Endothelial cell of umbilical vein (primary cell): ENCODE measurements at regions of chr1 and their contacts with region 1.

Region 1: GRCh38 chr1:171644805-171645483 is 7.5 kb downstream of the MYOC start:
- DNase-seq: peak; percentile 86
- H3K4me3 ChIP-seq: no peak overlapping the region
- H3K27ac ChIP-seq: no peak overlapping the region
- H3K4me1 ChIP-seq: no peaks in the 10 kb centered on the region
- H3K27me3 ChIP-seq: peaks cover 0 to 2% of the 10 kb centered on the region in 2 experiments
- CTCF ChIP-seq: peak; percentile 78 to 86
- POLR2A ChIP-seq: no peak

Region 2: GRCh38 chr1:171590022-171590421 is 54.9 kb before region 1 on chr1:
- CTCF ChIA-PET with region 1: no interaction called
- POLR2A ChIA-PET with region 1: no interaction called
- dilution Hi-C with region 1: no loop called
- intact Hi-C with region 1: no loop called
- DNase-seq: no peak
- H3K4me3 ChIP-seq: no peak overlapping the region
- H3K27ac ChIP-seq: no peak overlapping the region
- H3K4me1 ChIP-seq: no peaks in the 10 kb centered on the region
- H3K27me3 ChIP-seq: no peaks in the 10 kb centered on the region
- CTCF ChIP-seq: no peak
- POLR2A ChIP-seq: no peak

Region 3: DNA sequence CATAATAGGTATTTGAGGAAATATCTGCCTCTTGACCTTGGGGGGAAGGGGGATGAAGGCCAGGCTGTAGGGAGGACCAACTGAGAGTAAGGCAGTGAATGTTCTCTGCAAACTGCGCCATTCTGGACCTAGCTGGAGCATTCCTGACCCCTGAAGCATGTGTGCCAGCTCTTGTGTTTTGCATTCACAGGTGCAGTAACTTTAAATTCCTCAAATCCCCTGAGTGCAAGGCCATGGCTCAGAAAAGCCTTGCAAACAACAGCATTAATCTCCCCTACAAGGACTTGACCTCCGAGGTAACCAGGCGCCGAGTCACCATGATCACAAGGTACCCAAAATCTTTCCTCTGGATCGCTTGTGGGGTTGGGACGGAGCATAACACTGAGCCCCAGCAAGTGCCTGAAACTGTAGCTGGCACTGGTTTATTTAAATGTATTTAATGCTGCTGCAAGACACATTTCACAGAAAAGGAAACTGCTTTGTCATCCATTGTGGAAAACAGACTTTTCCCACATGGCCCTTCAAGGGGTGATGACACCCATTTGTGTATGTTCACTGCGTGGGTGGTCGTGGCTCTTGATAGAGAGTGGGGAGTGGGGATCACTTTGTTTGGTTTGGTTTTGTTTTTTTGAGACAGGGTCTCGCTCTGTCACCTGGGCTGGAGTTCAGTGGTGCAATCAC is 21.2 kb before region 1 on chr1:
- CTCF ChIA-PET with region 1: interaction called, 21 read pairs
- POLR2A ChIA-PET with region 1: no interaction called
- dilution Hi-C with region 1: no loop called
- intact Hi-C with region 1: no loop called
- DNase-seq: no peak
- H3K4me3 ChIP-seq: no peak overlapping the region
- H3K27ac ChIP-seq: no peak overlapping the region
- H3K4me1 ChIP-seq: no peaks in the 10 kb centered on the region
- H3K27me3 ChIP-seq: peaks cover 1 to 5% of the 10 kb centered on the region in 2 experiments
- CTCF ChIP-seq: no peak
- POLR2A ChIP-seq: no peak

Region 4: DNA sequence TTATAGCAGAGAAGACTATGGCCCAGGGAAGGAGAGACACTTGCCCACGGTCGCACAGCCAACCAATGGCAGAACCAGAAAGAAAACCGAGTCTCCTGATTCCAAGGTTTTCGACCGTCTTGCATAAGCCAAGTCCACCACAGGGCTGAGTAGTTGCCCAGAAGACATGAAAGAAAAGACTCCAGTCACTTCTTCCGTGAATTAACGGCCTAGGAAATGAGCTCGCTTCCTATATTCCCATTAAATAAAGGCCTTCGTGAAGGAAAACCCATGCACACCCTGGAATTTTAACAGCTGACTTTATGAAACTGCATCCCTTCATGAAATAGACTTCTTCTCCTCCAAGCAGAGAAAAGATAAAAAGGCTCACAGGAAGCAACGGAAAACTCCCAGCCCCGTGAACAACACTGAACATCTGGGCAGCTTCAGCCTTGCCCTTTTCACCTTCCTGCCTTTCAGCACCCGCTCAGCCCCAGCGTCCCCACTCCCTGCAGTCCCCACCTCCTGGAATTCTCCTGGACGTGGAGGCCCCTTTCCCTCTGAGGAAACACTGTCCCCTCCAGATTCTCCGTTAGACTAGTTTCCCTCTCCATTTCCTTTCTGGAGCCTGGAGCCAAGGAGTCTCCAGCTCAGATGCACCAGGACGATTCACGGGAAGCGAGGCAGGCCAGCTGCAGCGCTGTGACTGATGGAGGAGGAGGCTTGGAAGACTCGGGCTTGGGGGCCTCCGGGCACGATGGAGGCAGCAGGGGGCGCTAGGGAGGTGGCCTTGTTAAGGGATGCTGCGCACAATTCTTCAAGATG is 10.2 kb after region 1 on chr1:
- CTCF ChIA-PET with region 1: interaction called, 86 read pairs
- POLR2A ChIA-PET with region 1: no interaction called
- dilution Hi-C with region 1: no loop called
- intact Hi-C with region 1: loop called (anchors 1 kb)
- DNase-seq: peak; percentile 72
- H3K4me3 ChIP-seq: no peak overlapping the region
- H3K27ac ChIP-seq: peak overlapping the region; percentile 63
- H3K4me1 ChIP-seq: peaks cover 17% of the 10 kb centered on the region
- H3K27me3 ChIP-seq: peaks cover 0 to 6% of the 10 kb centered on the region in 2 experiments
- CTCF ChIP-seq: peak; percentile 86 to 95
- POLR2A ChIP-seq: no peak

Region 5: DNA sequence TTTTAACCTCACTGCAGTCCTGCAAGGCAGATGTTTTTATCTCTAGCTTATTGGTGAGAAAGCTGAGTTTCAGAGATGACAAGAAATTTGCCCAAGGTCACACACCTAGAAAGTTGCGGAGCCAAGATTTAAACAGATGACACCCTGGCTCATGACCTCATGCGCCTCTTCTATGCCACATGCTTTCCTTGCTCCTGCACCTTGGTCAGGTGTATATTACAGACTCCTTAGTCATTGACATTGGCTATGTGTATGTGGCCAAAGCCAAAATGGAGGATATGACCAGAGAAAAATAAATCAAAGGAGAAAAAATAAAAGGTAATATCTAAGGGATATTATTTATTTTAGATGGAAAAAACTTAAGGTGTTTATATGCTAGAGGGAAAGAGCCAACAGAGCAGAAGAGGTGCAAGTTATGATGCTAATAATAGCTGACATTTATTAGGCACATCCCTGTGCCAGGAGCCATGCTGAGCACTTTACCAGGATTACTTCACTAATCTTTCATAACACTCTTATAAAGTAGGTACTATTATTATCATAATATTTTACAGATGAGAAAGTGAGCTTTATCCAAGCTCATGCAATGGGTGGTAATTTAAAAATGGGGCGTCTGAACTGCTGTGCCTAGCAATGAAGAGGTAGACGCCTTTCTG is 21.3 kb after region 1 on chr1:
- CTCF ChIA-PET with region 1: interaction called, 10 read pairs
- POLR2A ChIA-PET with region 1: no interaction called
- dilution Hi-C with region 1: no loop called
- intact Hi-C with region 1: no loop called
- DNase-seq: no peak
- H3K4me3 ChIP-seq: no peak overlapping the region
- H3K27ac ChIP-seq: no peak overlapping the region
- H3K4me1 ChIP-seq: no peaks in the 10 kb centered on the region
- H3K27me3 ChIP-seq: peaks cover 0 to 1% of the 10 kb centered on the region in 2 experiments
- CTCF ChIP-seq: no peak
- POLR2A ChIP-seq: no peak

Region 6: GRCh38 chr1:171741872-171742576 is 97.1 kb after region 1 on chr1 and contains the start of gene VAMP4:
- CTCF ChIA-PET with region 1: interaction called, 22 read pairs
- POLR2A ChIA-PET with region 1: no interaction called
- dilution Hi-C with region 1: no loop called
- intact Hi-C with region 1: no loop called
- DNase-seq: peak; percentile 87
- H3K4me3 ChIP-seq: peak within 1 kb of the TSS; percentile 59 to 83 (median 81)
- H3K27ac ChIP-seq: peak within 1 kb of the TSS; percentile 57
- H3K4me1 ChIP-seq: peaks cover 31% of the 10 kb centered on the region
- H3K27me3 ChIP-seq: no peaks in the 10 kb centered on the region
- CTCF ChIP-seq: no peak
- POLR2A ChIP-seq: peak; percentile 60
- total RNA-seq, gene VAMP4: 10.1 and 10.4 TPM in 2 replicates

Region 7: GRCh38 chr1:171781176-171781875 is 136.4 kb after region 1 on chr1 and contains the start of gene METTL13:
- CTCF ChIA-PET with region 1: interaction called, 16 read pairs
- POLR2A ChIA-PET with region 1: no interaction called
- dilution Hi-C with region 1: no loop called
- intact Hi-C with region 1: loop called (anchors 1 kb)
- DNase-seq: peak; percentile 100
- H3K4me3 ChIP-seq: peak within 1 kb of the TSS; percentile 69 to 85 (median 81)
- H3K27ac ChIP-seq: peak within 1 kb of the TSS; percentile 66
- H3K4me1 ChIP-seq: peaks cover 7% of the 10 kb centered on the region
- H3K27me3 ChIP-seq: peaks cover 0 to 1% of the 10 kb centered on the region in 2 experiments
- CTCF ChIP-seq: no peak
- POLR2A ChIP-seq: peak; percentile 65
- total RNA-seq, gene METTL13: 26.5 and 29.7 TPM in 2 replicates

Region 8: GRCh38 chr1:171929121-171929520 is 284.2 kb after region 1 on chr1:
- CTCF ChIA-PET with region 1: no interaction called
- POLR2A ChIA-PET with region 1: no interaction called
- dilution Hi-C with region 1: no loop called
- intact Hi-C with region 1: no loop called
- DNase-seq: no peak
- H3K4me3 ChIP-seq: no peak overlapping the region
- H3K27ac ChIP-seq: no peak overlapping the region
- H3K4me1 ChIP-seq: no peaks in the 10 kb centered on the region
- H3K27me3 ChIP-seq: no peaks in the 10 kb centered on the region
- CTCF ChIP-seq: peak in 1 of 2 donors; percentile 18
- POLR2A ChIP-seq: no peak

Region 9: DNA sequence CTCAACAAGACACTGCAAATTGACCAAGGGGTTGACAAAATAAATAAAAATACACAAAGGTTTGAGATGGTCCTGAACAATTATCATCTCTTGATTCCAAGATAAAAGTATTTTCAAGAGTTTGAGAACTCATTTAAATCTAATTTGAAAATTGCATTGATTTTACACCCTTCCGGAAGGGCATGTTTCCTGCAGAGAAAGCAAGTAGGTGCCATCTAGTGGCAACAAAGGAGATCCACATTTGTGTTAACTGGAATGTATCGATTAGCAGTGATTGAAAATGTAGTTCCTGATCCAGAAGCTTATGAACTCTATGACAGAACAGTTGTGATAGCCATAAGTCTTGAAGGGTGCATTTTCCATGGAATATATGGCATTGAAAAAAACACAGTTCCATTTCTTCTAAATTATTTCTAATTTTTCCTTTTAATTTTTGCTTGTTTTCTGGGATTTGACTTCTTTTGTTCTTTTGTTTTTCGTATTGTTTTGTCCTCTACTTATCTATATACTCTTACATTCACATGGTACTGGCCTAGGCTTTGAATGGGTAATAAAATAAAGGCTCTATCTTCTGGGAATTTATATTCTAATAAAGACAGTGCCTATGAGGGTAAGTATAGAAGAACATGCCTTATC is 340.0 kb after region 1 on chr1:
- CTCF ChIA-PET with region 1: interaction called, 200 read pairs
- POLR2A ChIA-PET with region 1: interaction called, 4 read pairs
- dilution Hi-C with region 1: loop called (anchors 25 kb)
- intact Hi-C with region 1: loop called (anchors 1 kb)
- DNase-seq: peak; percentile 36
- H3K4me3 ChIP-seq: no peak overlapping the region
- H3K27ac ChIP-seq: no peak overlapping the region
- H3K4me1 ChIP-seq: no peaks in the 10 kb centered on the region
- H3K27me3 ChIP-seq: no peaks in the 10 kb centered on the region
- CTCF ChIP-seq: peak; percentile 60 to 62
- POLR2A ChIP-seq: no peak